BJ (cell line): ENCODE measurements at regions of chr14 and their contacts with region 1.

Region 1: DNA sequence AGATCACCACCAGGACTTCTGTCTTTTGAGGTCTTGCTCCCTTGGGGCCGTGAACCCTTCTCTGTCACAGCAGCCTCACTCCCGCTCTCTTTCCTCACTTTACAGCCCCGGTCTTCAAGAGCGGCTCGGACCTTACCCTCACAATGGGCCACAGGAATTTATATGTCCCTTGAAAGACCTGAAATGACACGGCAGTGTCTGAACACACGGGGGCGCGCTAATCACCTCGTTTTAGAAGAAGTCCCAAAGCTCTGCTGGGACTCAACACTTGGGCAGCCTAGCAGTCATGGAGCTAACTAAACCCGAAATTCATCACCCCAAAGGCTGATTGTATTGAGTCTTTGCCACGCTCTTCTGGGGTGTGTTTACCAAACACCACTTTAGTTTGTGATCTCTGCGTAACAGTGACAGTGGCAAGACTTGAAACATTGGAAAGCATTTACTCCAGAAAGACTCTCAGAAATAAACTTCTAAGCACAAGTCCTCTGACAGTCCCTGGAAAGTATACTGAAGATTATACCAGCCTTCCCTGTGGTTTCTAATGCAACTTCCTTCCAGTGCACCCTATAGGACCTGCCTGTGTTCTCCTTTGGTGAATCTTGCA is 29.0 kb downstream of the SERPINA11 start:
- DNase-seq: no peak
- H3K4me3 ChIP-seq: no peak overlapping the region
- H3K27me3 ChIP-seq: peaks cover 2% of the 10 kb centered on the region; the same call in 1 of the 2 replicates
- CTCF ChIP-seq: peak; percentile 79

Region 2: DNA sequence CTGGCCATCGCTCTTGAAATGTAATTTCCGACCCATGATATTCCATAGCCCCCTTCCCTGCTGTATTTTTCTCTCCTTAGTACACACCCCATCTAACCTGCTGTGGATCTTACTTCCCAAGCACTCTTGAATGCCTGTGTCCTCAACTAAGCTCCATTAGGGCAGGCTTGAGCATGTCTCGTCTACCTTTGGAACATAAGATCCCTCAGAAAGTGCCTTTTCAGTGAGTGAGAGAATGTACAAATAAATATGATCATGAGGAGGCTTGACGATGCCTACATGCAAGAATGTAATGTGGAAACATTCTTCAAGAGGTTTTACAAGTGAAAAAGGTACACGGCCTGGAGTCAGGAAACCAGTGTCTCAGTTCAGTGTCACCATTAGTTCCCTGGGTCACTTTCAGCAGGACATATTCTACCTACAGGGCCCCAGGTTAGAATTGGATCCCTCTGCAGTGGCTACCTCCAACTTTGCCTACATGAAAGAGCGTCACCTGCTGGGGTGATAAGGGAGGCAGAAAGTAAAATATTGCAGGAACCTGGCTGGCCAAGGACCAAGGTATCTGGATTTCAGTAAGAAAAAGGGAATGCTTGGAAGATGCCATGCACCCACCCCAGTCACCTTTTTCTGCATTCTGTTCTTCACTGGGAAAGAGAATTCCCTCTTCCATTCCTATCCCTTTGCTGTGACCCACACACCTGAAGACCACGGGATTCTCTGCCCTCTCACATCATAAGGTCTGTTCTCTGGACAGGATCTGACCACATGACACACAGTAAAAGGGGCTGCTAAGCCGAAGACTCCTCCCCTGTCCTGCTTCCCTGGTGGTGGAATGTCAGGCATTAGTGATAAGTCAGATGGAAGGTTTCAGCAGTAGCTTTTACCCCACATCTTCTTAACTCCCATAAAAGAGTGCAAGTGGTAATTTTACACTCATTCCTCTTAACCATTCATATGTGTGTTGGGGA is 10.6 kb before region 1 on chr14:
- CTCF ChIA-PET with region 1: interaction called, 20 read pairs
- POLR2A ChIA-PET with region 1: no interaction called
- DNase-seq: no peak
- H3K4me3 ChIP-seq: no peak overlapping the region
- H3K27me3 ChIP-seq: no peaks in the 10 kb centered on the region; the same call in 1 of the 2 replicates
- CTCF ChIP-seq: peak; percentile 48

Region 3: GRCh38 chr14:94439453-94440057 is 16.0 kb after region 1 on chr14:
- CTCF ChIA-PET with region 1: interaction called, 17 read pairs
- POLR2A ChIA-PET with region 1: no interaction called
- DNase-seq: no peak
- H3K4me3 ChIP-seq: no peak overlapping the region
- H3K27me3 ChIP-seq: no peaks in the 10 kb centered on the region
- CTCF ChIP-seq: no peak

Region 4: GRCh38 chr14:94707494-94707893 is 283.9 kb after region 1 on chr14:
- CTCF ChIA-PET with region 1: no interaction called
- POLR2A ChIA-PET with region 1: no interaction called
- DNase-seq: no peak
- H3K4me3 ChIP-seq: no peak overlapping the region
- H3K27me3 ChIP-seq: no peaks in the 10 kb centered on the region
- CTCF ChIP-seq: no peak